Activated CD4-positive, alpha-beta T cell treated with anti-CD3 and anti-CD28 coated beads, Interleukin-2, amount 10 ng/mL, durations not matched to agents 24 days and 14 days (primary cell): ENCODE measurements at regions of chr3 and their contacts with region 1.

Region 1: DNA sequence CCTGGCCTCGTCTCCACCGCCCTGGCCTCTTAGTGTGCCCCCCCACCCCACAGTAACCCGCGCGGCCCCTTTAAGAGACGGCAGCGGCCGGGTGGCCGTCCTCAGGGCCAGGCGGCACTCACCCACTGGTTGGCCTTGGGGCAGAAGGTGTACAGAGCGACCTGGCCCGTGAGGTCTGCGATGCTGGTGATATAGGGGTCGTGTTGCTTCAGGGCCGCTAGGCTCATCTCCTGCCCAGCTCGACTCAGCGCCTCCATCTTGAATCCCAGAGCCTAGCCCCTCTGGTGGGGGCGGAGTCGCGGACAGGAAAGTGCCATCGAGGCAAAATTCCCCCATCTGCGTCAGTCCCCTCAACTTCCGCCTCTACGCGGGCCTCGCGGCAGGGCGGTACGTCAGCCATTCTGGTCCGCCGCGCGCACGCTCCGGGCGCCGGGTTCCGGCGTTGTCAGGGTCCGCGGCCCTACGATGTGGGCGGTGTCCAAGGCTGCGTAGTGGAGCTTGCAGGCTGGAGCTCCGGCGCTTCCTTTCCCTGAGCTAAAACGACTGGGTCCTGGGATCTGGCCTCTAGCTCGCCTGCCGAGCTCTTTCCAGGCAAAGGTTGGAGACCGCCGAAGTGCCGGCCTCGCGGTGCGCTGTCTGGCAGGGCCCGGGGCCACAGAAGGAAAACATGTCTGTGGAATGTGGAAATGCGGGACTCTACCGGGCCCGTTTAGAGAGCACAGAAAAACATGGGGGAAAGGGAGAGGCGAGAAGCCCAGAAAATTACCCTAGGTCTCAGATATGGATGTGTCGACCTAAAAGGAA is at the start of gene DCP1A:
- DNase-seq: peak; percentile 99
- H3K4me3 Mint-ChIP-seq: peak within 1 kb of the TSS; percentile 96
- H3K27ac Mint-ChIP-seq: peak within 1 kb of the TSS; percentile 100
- H3K4me1 Mint-ChIP-seq: peaks cover 20% of the 10 kb centered on the region
- H3K27me3 Mint-ChIP-seq: no peaks in the 10 kb centered on the region
- total RNA-seq, gene DCP1A: 42.1 and 50.3 TPM in 2 replicates

Region 2: GRCh38 chr3:53130179-53131061 is 217.0 kb before region 1 on chr3 and contains the start of gene RFT1:
- intact Hi-C with region 1: loop called (anchors 10 kb)
- DNase-seq: peak; percentile 100
- H3K4me3 Mint-ChIP-seq: peak within 1 kb of the TSS; percentile 89
- H3K27ac Mint-ChIP-seq: peak within 1 kb of the TSS; percentile 93
- H3K4me1 Mint-ChIP-seq: peaks cover 15% of the 10 kb centered on the region
- H3K27me3 Mint-ChIP-seq: no peaks in the 10 kb centered on the region
- total RNA-seq, gene RFT1: 47.4 and 47.6 TPM in 2 replicates

Region 3: DNA sequence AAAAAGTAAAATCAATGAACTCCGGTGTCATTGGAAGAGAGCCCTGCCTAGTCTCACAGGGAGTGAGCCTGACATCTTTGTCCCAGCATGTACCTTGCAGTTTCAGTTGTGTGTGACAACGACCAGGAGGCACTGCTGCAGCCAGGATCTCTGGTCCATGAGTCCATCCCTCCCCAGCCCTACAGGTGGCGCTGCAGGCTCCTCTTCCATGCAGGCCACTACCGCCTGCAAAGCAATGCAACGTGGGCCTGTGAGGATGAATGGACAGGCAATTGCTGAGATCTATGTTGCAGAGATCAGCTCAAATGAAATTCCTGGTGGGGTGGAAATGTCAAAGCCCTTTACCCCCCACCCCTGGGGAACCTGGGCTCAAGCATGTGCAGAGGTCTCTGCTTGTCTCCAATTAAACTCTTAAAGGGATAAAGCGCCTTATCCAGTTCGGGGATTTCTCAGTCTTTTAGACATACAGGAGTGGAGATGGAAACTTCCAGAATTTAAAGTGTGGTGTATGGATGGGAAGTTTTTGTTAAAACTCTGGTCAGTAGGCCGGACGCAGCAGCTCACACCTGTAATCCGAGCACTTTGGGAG is 127.5 kb before region 1 on chr3:
- intact Hi-C with region 1: loop called (anchors 10 kb)
- DNase-seq: peak; percentile 95
- H3K4me3 Mint-ChIP-seq: no peak overlapping the region
- H3K27ac Mint-ChIP-seq: peak overlapping the region; percentile 10
- H3K4me1 Mint-ChIP-seq: peaks cover 5% of the 10 kb centered on the region
- H3K27me3 Mint-ChIP-seq: peaks cover 2% of the 10 kb centered on the region

Region 4: GRCh38 chr3:53255775-53256703 is 91.4 kb before region 1 on chr3 and contains the start of gene TKT:
- intact Hi-C with region 1: loop called (anchors 1 kb)
- DNase-seq: peak; percentile 95
- H3K4me3 Mint-ChIP-seq: peak within 1 kb of the TSS; percentile 98
- H3K27ac Mint-ChIP-seq: peak within 1 kb of the TSS; percentile 93
- H3K4me1 Mint-ChIP-seq: peaks cover 30% of the 10 kb centered on the region
- H3K27me3 Mint-ChIP-seq: peaks cover 2% of the 10 kb centered on the region
- total RNA-seq, gene TKT: 377 and 379 TPM in 2 replicates

Region 5: DNA sequence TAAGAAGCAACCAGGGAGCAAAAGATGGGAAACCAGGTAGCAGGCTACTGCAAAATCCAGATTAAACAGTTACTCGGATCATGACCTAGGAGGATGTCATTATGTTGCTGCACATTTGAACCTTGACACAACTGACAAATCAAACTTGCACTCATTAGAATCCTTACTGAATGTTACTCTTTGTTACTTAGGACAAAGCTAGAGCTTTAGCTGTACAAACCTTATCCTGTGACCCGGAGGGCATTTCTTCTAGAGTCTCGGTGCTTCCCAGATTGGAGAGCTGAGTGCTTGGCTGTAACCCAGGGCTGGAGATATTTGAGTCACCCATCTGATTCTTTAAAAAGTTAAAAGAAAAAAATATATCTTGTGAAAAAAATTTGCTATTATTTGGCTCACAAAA is 43.5 kb before region 1 on chr3:
- intact Hi-C with region 1: loop called (anchors 2 kb)
- DNase-seq: no peak
- H3K4me3 Mint-ChIP-seq: no peak overlapping the region
- H3K27ac Mint-ChIP-seq: peak overlapping the region; percentile 18
- H3K4me1 Mint-ChIP-seq: peaks cover 2% of the 10 kb centered on the region
- H3K27me3 Mint-ChIP-seq: no peaks in the 10 kb centered on the region

Region 6: GRCh38 chr3:53320697-53321096 is 26.8 kb before region 1 on chr3:
- intact Hi-C with region 1: no loop called
- DNase-seq: no peak
- H3K4me3 Mint-ChIP-seq: no peak overlapping the region
- H3K27ac Mint-ChIP-seq: no peak overlapping the region
- H3K4me1 Mint-ChIP-seq: peaks cover 1% of the 10 kb centered on the region
- H3K27me3 Mint-ChIP-seq: no peaks in the 10 kb centered on the region

Region 7: GRCh38 chr3:53891497-53892285 is 544.2 kb after region 1 on chr3 and contains the start of gene SELENOK:
- intact Hi-C with region 1: loop called (anchors 2 kb)
- DNase-seq: peak; percentile 99
- H3K4me3 Mint-ChIP-seq: peak within 1 kb of the TSS; percentile 85
- H3K27ac Mint-ChIP-seq: peak within 1 kb of the TSS; percentile 93
- H3K4me1 Mint-ChIP-seq: peaks cover 47% of the 10 kb centered on the region
- H3K27me3 Mint-ChIP-seq: peaks cover 16% of the 10 kb centered on the region
- total RNA-seq, gene SELENOK: 51.4 and 58.5 TPM in 2 replicates